ENCODE measurements at regions of chr11 and their contacts with region 1.

Region 1: GRCh38 chr11:75896843-75897419 is 81.9 kb downstream of the UVRAG start:
- DNase-seq: no peak
- ATAC-seq: peak; percentile 58
- H3K4me3 ChIP-seq: no peak overlapping the region
- H3K27ac ChIP-seq: no peak overlapping the region
- H3K4me1 ChIP-seq: no peaks in the 10 kb centered on the region
- H3K27me3 ChIP-seq: no peaks in the 10 kb centered on the region
- CTCF ChIP-seq: peak; percentile 44 to 82 (median 77)
- POLR2A ChIP-seq: no peak

Region 2: GRCh38 chr11:76148941-76149613 is 252.1 kb after region 1 on chr11:
- intact Hi-C with region 1: loop called (anchors 5 kb)
- DNase-seq: no peak
- ATAC-seq: no peak
- H3K4me3 ChIP-seq: no peak overlapping the region
- H3K27ac ChIP-seq: no peak overlapping the region
- H3K4me1 ChIP-seq: peaks cover 36% of the 10 kb centered on the region
- H3K27me3 ChIP-seq: no peaks in the 10 kb centered on the region
- CTCF ChIP-seq: no peak
- POLR2A ChIP-seq: no peak

Region 3: DNA sequence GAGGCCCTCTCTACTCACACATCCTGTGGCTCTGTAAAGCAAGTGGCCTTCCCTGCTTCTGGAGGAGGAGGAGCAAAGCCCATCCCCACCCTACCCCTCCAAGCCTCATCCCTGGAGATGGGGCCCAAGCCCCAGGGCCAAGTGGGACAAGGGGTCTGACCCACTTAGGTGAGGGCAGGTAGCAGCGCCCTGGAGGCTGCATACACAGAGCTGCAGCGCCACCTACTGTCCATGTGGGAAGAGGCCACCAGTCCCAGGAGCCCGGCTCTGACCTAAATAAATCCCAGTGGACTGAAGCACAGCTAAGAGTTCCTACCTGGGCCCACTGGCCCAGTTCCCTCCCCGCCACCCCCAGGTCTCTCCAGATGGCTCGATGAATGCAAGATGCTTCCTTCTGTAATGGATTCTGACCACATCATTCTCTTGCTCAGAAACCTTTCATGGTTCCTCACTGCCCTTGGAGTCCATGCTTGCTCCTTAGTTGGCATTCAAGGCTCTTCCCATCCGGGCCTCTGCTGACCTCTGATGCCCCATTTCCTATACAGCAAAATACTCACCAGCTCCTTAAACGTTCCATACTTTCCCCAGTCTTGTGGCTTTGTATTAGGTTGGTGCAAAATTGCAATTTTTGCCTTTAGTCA is 421.9 kb after region 1 on chr11:
- intact Hi-C with region 1: loop called (anchors 10 kb)
- DNase-seq: peak; percentile 87 to 92 (median 90)
- ATAC-seq: peak; percentile 68
- H3K4me3 ChIP-seq: no peak overlapping the region
- H3K27ac ChIP-seq: no peak overlapping the region
- H3K4me1 ChIP-seq: peaks cover 19% of the 10 kb centered on the region
- H3K27me3 ChIP-seq: no peaks in the 10 kb centered on the region
- CTCF ChIP-seq: peak; percentile 88 to 97 (median 90)
- POLR2A ChIP-seq: no peak